ENCODE measurements at regions of chr12 and their contacts with region 1.

Region 1: GRCh38 chr12:49232940-49233841 is 31.7 kb upstream of the TUBA1C start:
- DNase-seq: no peak
- ATAC-seq: no peak
- H3K4me3 ChIP-seq: peak overlapping the region; percentile 4; the same call in 1 of the 2 replicates
- H3K27ac ChIP-seq: no peak overlapping the region
- H3K4me1 ChIP-seq: peaks cover 3% of the 10 kb centered on the region; the same call in 1 of the 2 replicates
- H3K27me3 ChIP-seq: no peaks in the 10 kb centered on the region
- CTCF ChIP-seq: no peak
- EP300 ChIP-seq: no peak
- POLR2A ChIP-seq: no peak
- RAD21 ChIP-seq: no peak

Region 2: GRCh38 chr12:49069507-49070346 is 163.5 kb before region 1 on chr12 and contains the start of gene RHEBL1:
- CTCF ChIA-PET with region 1: interaction called, 17 read pairs
- POLR2A ChIA-PET with region 1: no interaction called
- RAD21 ChIA-PET with region 1: interaction called, 4 read pairs
- SMC1A ChIA-PET with region 1: interaction called, 3 read pairs
- in situ Hi-C with region 1: loop called (anchors 10 kb)
- intact Hi-C with region 1: loop called (anchors 1 kb)
- DNase-seq: peak; percentile 94
- ATAC-seq: peak; percentile 99
- H3K4me3 ChIP-seq: peak within 1 kb of the TSS; percentile 93
- H3K27ac ChIP-seq: peak within 1 kb of the TSS; percentile 91
- H3K4me1 ChIP-seq: peaks cover 4% of the 10 kb centered on the region
- H3K27me3 ChIP-seq: no peaks in the 10 kb centered on the region
- CTCF ChIP-seq: peak; percentile 33 to 37 (median 36); a peak in 4 of 6 replicates
- EP300 ChIP-seq: peak in 1 of 2 experiments; percentile 30; a peak in 1 of 4 replicates
- POLR2A ChIP-seq: peak; percentile 79
- RAD21 ChIP-seq: no peak
- polyA plus RNA-seq, gene RHEBL1: 17.9 to 18.7 TPM

Region 3: GRCh38 chr12:49098035-49098451 is 135.1 kb before region 1 on chr12:
- CTCF ChIA-PET with region 1: interaction called, 14 read pairs
- POLR2A ChIA-PET with region 1: no interaction called
- RAD21 ChIA-PET with region 1: interaction called, 3 read pairs
- SMC1A ChIA-PET with region 1: interaction called, 12 read pairs
- in situ Hi-C with region 1: no loop called
- intact Hi-C with region 1: no loop called
- DNase-seq: no peak
- ATAC-seq: peak; percentile 80
- H3K4me3 ChIP-seq: no peak overlapping the region
- H3K27ac ChIP-seq: no peak overlapping the region
- H3K4me1 ChIP-seq: no peaks in the 10 kb centered on the region
- H3K27me3 ChIP-seq: peaks cover 6 to 10% of the 10 kb centered on the region in 2 experiments
- CTCF ChIP-seq: peak; percentile 76 to 89 (median 84)
- EP300 ChIP-seq: no peak
- POLR2A ChIP-seq: no peak
- RAD21 ChIP-seq: peak; percentile 55

Region 4: DNA sequence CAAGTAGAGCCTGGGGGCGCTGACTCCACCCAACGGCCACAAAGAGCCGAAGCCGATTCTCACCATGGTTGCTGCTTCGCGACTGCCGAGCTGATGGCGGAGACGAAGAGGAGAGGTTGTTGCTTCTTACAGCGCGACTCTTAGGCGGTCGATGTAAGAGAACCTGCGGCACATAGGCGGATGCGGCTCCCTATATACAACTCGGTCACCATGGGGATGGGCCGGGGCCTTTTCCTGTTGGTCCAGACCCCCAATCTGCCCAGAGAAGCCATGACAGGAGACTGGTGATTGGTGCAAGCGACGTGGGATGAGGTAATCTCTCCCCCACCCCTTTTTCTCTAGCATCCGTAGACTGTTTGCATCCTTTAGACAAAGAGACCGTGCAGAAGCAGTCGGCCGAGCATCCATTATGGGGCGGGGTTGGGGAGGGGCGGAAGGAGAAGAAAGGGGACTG is 44.2 kb before region 1 on chr12 and contains the start of gene TUBA1A:
- CTCF ChIA-PET with region 1: interaction called, 5 read pairs
- POLR2A ChIA-PET with region 1: interaction called, 4 read pairs
- RAD21 ChIA-PET with region 1: no interaction called
- SMC1A ChIA-PET with region 1: no interaction called
- in situ Hi-C with region 1: no loop called
- intact Hi-C with region 1: loop called (anchors 2 kb)
- DNase-seq: peak; percentile 75
- ATAC-seq: peak; percentile 93
- H3K4me3 ChIP-seq: peak within 1 kb of the TSS; percentile 75
- H3K27ac ChIP-seq: peak within 1 kb of the TSS; percentile 72
- H3K4me1 ChIP-seq: no peaks in the 10 kb centered on the region; the same call in none of the 2 replicates
- H3K27me3 ChIP-seq: no peaks in the 10 kb centered on the region; a peak in 1 of 4 replicates
- CTCF ChIP-seq: no peak
- EP300 ChIP-seq: no peak
- POLR2A ChIP-seq: peak; percentile 96
- RAD21 ChIP-seq: no peak
- polyA plus RNA-seq, gene TUBA1A: 431 to 496 TPM

Region 5: DNA sequence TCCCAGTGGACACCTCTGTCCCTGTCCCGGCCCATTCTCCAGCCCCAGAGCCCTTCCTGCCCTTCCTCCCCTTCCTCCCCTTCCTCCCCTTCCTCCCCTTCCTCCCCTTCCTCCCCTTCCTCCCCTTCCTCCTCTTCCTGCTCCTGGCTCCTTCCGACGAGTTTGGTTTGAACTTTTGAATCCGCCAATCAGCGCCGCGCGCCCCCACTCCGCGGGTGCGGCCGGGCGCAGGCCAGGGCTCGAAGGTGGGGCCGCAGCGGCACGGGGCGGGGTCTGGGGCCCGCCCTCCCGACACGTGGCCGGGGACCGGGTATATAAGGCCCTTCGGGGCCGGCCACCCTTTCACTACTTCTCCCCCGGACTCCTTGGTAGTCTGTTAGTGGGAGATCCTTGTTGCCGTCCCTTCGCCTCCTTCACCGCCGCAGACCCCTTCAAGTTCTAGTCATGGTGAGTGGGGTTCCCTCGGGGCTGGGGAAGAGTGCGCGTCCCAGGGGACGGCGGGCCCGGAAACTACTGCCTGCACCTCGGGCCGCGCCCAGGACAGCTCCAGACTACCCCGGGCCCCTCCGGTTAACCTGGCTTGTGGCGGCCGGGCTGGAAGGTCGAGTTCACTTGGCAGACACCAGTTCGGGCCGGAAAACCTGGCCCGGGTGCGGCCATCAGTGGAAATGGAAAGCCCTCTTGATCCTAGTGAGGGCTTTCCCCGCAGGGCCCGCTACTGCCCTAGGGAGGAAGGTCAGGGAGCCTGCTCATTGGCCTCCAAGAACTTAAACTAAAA is 31.7 kb after region 1 on chr12 and contains the start of gene TUBA1C:
- CTCF ChIA-PET with region 1: interaction called, 5 read pairs
- POLR2A ChIA-PET with region 1: interaction called, 10 read pairs
- RAD21 ChIA-PET with region 1: no interaction called
- SMC1A ChIA-PET with region 1: interaction called, 3 read pairs
- in situ Hi-C with region 1: no loop called
- intact Hi-C with region 1: loop called (anchors 2 kb)
- DNase-seq: peak; percentile 57
- ATAC-seq: peak; percentile 95
- H3K4me3 ChIP-seq: peak within 1 kb of the TSS; percentile 96
- H3K27ac ChIP-seq: peak within 1 kb of the TSS; percentile 93
- H3K4me1 ChIP-seq: peaks cover 14% of the 10 kb centered on the region
- H3K27me3 ChIP-seq: no peaks in the 10 kb centered on the region
- CTCF ChIP-seq: no peak
- EP300 ChIP-seq: no peak
- POLR2A ChIP-seq: peak; percentile 98
- RAD21 ChIP-seq: no peak
- polyA plus RNA-seq, gene TUBA1C: 285 to 374 TPM

Region 6: DNA sequence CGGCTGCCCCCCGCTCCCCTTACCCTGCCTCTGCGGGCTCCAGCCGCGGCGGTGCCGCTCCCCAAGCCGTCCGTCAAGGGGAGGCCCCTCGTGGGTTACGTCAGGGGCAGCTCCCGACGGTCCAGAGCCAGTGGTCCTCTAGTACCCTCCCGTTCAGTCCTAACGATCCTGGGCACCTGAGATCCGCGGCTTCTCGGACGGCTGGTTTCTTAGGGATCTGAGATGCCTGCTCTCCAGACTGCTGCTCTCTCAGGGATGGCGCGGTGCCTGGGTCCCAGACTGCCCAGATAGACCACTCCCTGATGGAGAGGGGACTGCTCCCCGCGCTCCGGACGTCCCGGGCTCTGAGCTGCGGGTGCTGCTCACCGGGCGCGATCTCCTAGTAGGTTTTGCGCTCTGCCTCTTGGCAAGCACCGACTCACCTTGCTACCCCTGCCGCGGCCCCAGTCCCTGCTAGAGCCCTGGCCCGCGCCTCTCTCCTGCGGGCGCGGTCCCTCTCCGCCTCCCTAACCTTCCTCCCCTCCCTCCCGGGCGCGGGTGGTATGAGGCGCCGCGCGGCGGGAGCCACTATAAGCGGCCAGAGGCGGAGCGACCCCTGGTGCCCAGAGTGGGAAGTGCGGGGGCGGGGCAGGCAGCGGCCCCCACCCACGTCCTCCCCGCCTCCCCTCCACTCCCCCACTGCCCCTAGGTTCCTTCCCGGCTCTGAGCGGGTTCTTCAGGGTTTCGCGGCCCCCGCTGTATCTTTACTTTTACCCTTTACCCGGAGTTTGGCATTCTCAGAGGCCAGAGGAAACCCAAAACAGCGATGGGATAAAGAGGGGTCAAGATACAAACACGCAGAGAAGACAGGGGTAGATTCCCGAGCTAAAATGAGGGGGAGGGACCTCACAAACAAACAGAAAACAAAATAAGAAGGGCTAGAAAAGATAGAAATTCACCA is 103.7 kb after region 1 on chr12 and contains the start of gene C1QL4:
- CTCF ChIA-PET with region 1: no interaction called
- POLR2A ChIA-PET with region 1: no interaction called
- RAD21 ChIA-PET with region 1: no interaction called
- SMC1A ChIA-PET with region 1: no interaction called
- in situ Hi-C with region 1: no loop called
- intact Hi-C with region 1: no loop called
- DNase-seq: no peak
- ATAC-seq: peak; percentile 79
- H3K4me3 ChIP-seq: peak within 1 kb of the TSS; percentile 48
- H3K27ac ChIP-seq: no peak within 1 kb of the TSS
- H3K4me1 ChIP-seq: no peaks in the 10 kb centered on the region
- H3K27me3 ChIP-seq: peaks cover 15 to 23% of the 10 kb centered on the region in 2 experiments
- CTCF ChIP-seq: peak; percentile 67 to 95 (median 74)
- EP300 ChIP-seq: no peak
- POLR2A ChIP-seq: peak; percentile 46; the same call in 1 of the 2 replicates
- RAD21 ChIP-seq: peak; percentile 51
- polyA plus RNA-seq, gene C1QL4: not detected

Region 7: GRCh38 chr12:49415521-49415970 is 182.4 kb after region 1 on chr12:
- CTCF ChIA-PET with region 1: no interaction called
- POLR2A ChIA-PET with region 1: no interaction called
- RAD21 ChIA-PET with region 1: no interaction called
- SMC1A ChIA-PET with region 1: no interaction called
- in situ Hi-C with region 1: no loop called
- intact Hi-C with region 1: no loop called
- DNase-seq: no peak
- ATAC-seq: no peak
- H3K4me3 ChIP-seq: no peak overlapping the region
- H3K27ac ChIP-seq: no peak overlapping the region
- H3K4me1 ChIP-seq: peaks cover under 1% of the 10 kb centered on the region; the same call in 1 of the 2 replicates
- H3K27me3 ChIP-seq: no peaks in the 10 kb centered on the region
- CTCF ChIP-seq: no peak
- EP300 ChIP-seq: no peak
- POLR2A ChIP-seq: no peak
- RAD21 ChIP-seq: no peak

Region 8: GRCh38 chr12:49451468-49452259 is 218.5 kb after region 1 on chr12:
- CTCF ChIA-PET with region 1: no interaction called
- POLR2A ChIA-PET with region 1: no interaction called
- RAD21 ChIA-PET with region 1: no interaction called
- SMC1A ChIA-PET with region 1: no interaction called
- in situ Hi-C with region 1: no loop called
- intact Hi-C with region 1: no loop called
- DNase-seq: peak; percentile 62
- ATAC-seq: peak; percentile 96
- H3K4me3 ChIP-seq: no peak overlapping the region
- H3K27ac ChIP-seq: peak overlapping the region; percentile 74
- H3K4me1 ChIP-seq: peaks cover 18% of the 10 kb centered on the region
- H3K27me3 ChIP-seq: no peaks in the 10 kb centered on the region
- CTCF ChIP-seq: no peak
- EP300 ChIP-seq: no peak
- POLR2A ChIP-seq: no peak
- RAD21 ChIP-seq: no peak

Measured in GM12878 (cell line).